H1 (cell line): ENCODE measurements at regions of chr1 and their contacts with region 1.

Region 1: GRCh38 chr1:12196641-12197482 is 30.1 kb downstream of the TNFRSF1B start:
- DNase-seq: no peak
- H3K4me3 ChIP-seq: no peak overlapping the region
- H3K27ac ChIP-seq: no peak overlapping the region
- H3K4me1 ChIP-seq: peaks cover 0 to 5% (median 2%) of the 10 kb centered on the region in 4 experiments; a peak in 2 of 7 replicates
- H3K27me3 ChIP-seq: no peaks in the 10 kb centered on the region
- CTCF ChIP-seq: peak; percentile 62 to 73 (median 65)
- EP300 ChIP-seq: no peak
- POLR2A ChIP-seq: no peak
- RAD21 ChIP-seq: peak; percentile 41 to 62; a peak in 3 of 4 replicates

Region 2: DNA sequence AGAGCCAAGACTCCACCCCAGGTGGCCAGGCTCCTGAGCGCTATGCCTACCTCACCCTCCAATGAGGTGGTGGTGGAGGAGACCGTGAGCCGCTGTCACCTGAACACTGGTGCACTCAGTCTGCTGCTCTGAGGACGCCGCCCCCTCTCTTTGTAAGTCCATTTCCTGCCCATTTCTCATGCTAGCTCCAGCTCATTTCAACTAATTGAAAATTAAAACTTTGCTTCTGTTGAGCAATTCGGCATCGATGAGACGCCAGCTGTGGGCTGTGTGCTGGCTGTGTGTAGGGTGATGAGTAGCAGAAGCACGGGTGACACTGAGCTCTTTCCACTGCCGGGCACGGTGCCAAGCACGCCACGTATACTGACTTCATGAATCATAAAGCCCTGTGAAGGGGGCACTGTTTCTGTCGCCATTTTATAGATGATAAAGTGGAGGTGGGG is 18.8 kb before region 1 on chr1:
- CTCF ChIA-PET with region 1: interaction called, 165 read pairs
- POLR2A ChIA-PET with region 1: no interaction called
- DNase-seq: no peak
- H3K4me3 ChIP-seq: no peak overlapping the region
- H3K27ac ChIP-seq: no peak overlapping the region
- H3K4me1 ChIP-seq: peaks cover 0 to 19% (median 2%) of the 10 kb centered on the region in 4 experiments; a peak in 3 of 7 replicates
- H3K27me3 ChIP-seq: no peaks in the 10 kb centered on the region
- CTCF ChIP-seq: no peak
- EP300 ChIP-seq: no peak
- POLR2A ChIP-seq: no peak
- RAD21 ChIP-seq: no peak

Region 3: GRCh38 chr1:12208764-12209494 is 12.1 kb after region 1 on chr1:
- CTCF ChIA-PET with region 1: interaction called, 73 read pairs
- POLR2A ChIA-PET with region 1: no interaction called
- DNase-seq: peak; percentile 82 to 99
- H3K4me3 ChIP-seq: no peak overlapping the region
- H3K27ac ChIP-seq: no peak overlapping the region
- H3K4me1 ChIP-seq: peaks cover 3 to 6% (median 4%) of the 10 kb centered on the region in 4 experiments; a peak in 6 of 7 replicates
- H3K27me3 ChIP-seq: no peaks in the 10 kb centered on the region
- CTCF ChIP-seq: peak; percentile 94 to 98 (median 94)
- EP300 ChIP-seq: no peak
- POLR2A ChIP-seq: no peak
- RAD21 ChIP-seq: peak; percentile 97

Region 4: DNA sequence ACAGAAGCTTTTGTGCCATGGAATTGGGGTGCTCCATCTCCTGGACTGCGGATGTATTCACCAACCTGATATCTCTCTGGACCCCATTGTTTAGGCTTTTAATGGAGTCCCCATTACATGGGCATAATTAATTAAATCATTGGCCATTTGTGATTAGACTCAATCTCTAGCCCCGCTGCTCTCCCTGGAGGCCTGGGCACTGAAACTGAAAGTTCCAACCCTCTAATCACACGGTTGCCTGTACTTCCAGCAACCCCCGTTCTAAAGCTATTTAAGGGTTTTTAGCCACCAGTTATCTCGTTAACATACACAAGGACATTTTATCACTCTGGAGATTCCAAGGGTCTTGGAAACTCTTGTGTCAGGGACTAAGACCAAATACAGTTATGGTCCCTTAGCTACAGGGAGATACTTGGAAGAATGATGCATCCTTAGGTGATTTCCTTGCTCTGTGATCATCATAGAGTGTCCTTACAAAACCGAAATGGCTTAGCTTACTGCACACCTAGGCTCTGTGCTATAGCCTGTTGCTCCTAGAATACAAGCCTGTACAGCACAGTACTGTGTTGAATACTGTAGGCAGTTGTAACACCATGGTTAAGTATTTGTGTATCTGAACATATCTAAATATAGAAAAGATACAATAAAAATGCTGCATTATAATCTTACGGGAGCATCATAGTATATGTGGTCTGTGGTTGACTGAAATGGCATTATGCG is 104.8 kb after region 1 on chr1:
- CTCF ChIA-PET with region 1: no interaction called
- POLR2A ChIA-PET with region 1: no interaction called
- DNase-seq: no peak
- H3K4me3 ChIP-seq: no peak overlapping the region
- H3K27ac ChIP-seq: no peak overlapping the region
- H3K4me1 ChIP-seq: no peaks in the 10 kb centered on the region
- H3K27me3 ChIP-seq: peaks cover 0 to 1% (median 0%) of the 10 kb centered on the region in 4 experiments; a peak in 1 of 7 replicates
- CTCF ChIP-seq: no peak
- EP300 ChIP-seq: no peak
- POLR2A ChIP-seq: no peak
- RAD21 ChIP-seq: no peak